ENCODE measurements at regions of chr13 and their contacts with region 1.

Region 1: GRCh38 chr13:35210261-35210660 is 266.2 kb downstream of the MAB21L1 start:
- DNase-seq: no peak
- ATAC-seq: no peak
- H3K4me3 ChIP-seq: no peak overlapping the region
- H3K27ac ChIP-seq: no peak overlapping the region
- H3K4me1 ChIP-seq: no peaks in the 10 kb centered on the region
- H3K27me3 ChIP-seq: no peaks in the 10 kb centered on the region
- CTCF ChIP-seq: no peak
- POLR2A ChIP-seq: no peak
- RAD21 ChIP-seq: no peak

Region 2: DNA sequence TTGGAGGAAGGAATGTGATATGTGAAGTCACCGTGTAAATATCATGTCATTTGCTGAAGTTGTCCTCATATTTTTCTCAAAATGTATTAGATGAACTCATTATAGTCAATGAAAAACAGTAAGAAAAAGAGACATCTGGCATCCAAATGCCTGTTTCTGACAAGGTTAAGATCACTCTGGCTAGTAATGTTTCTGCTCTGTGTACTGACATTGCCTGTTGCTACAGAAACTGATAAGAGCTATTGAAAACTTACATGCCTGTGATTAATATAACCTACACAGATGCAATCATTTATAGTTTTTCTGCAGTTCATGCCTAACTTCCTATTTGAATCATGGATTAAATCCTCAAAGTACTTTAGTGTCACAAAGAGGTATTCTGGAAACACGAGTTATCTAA is 18.4 kb before region 1 on chr13:
- CTCF ChIA-PET with region 1: no interaction called
- POLR2A ChIA-PET with region 1: interaction called, 15 read pairs
- dilution Hi-C with region 1: no loop called
- in situ Hi-C with region 1: no loop called
- intact Hi-C with region 1: no loop called
- DNase-seq: no peak
- ATAC-seq: no peak
- H3K4me3 ChIP-seq: no peak overlapping the region
- H3K27ac ChIP-seq: no peak overlapping the region
- H3K4me1 ChIP-seq: no peaks in the 10 kb centered on the region
- H3K27me3 ChIP-seq: no peaks in the 10 kb centered on the region
- CTCF ChIP-seq: no peak
- POLR2A ChIP-seq: no peak
- RAD21 ChIP-seq: no peak

Region 3: DNA sequence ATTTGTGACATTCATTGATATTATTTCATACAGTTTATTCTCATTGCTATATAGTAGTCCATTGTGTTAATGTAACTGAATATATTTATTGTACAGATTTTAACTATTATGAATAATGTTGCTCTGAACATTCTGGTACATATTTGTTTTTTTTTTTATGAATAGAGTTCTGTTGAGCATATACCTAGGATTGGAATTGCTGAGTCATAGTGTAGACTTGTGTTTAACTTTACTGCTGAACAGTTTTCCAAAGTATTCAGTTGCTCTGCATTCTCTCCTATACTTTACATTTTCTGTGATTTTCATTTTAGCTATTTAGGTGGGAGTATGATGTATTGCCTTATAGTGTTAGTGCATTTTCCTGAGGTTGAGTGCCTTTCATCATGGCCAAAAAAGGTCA is 168.7 kb after region 1 on chr13:
- CTCF ChIA-PET with region 1: no interaction called
- POLR2A ChIA-PET with region 1: no interaction called
- dilution Hi-C with region 1: no loop called
- in situ Hi-C with region 1: no loop called
- intact Hi-C with region 1: no loop called
- DNase-seq: peak; percentile 19
- ATAC-seq: peak; percentile 72
- H3K4me3 ChIP-seq: no peak overlapping the region
- H3K27ac ChIP-seq: no peak overlapping the region
- H3K4me1 ChIP-seq: no peaks in the 10 kb centered on the region
- H3K27me3 ChIP-seq: no peaks in the 10 kb centered on the region
- CTCF ChIP-seq: no peak
- POLR2A ChIP-seq: no peak
- RAD21 ChIP-seq: no peak

Region 4: GRCh38 chr13:35468195-35468594 is 257.9 kb after region 1 on chr13:
- CTCF ChIA-PET with region 1: no interaction called
- POLR2A ChIA-PET with region 1: no interaction called
- dilution Hi-C with region 1: no loop called
- in situ Hi-C with region 1: no loop called
- intact Hi-C with region 1: no loop called
- DNase-seq: no peak
- ATAC-seq: no peak
- H3K4me3 ChIP-seq: no peak overlapping the region
- H3K27ac ChIP-seq: no peak overlapping the region
- H3K4me1 ChIP-seq: no peaks in the 10 kb centered on the region
- H3K27me3 ChIP-seq: peaks cover 24% of the 10 kb centered on the region
- CTCF ChIP-seq: no peak
- POLR2A ChIP-seq: no peak
- RAD21 ChIP-seq: no peak

Region 5: DNA sequence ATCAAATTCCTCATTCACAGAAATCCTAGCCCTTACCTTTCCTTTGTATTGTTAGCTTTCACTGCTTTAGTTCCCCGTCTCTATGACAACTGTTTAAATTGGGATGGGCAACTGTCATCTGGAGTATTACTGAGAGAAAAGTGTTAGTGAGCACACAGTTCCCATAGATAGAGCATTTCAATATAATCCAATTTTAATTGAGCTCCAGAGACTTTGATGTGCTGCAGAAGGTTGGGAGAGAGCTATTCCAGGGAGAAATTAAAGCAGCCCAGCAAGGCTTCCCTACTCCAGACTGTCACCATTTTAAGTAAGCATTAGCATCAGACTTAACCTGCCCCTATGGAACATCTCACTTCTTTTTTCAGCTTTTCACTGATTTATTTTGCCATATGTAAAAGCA is 321.3 kb after region 1 on chr13:
- CTCF ChIA-PET with region 1: no interaction called
- POLR2A ChIA-PET with region 1: no interaction called
- dilution Hi-C with region 1: no loop called
- in situ Hi-C with region 1: no loop called
- intact Hi-C with region 1: no loop called
- DNase-seq: no peak
- ATAC-seq: no peak
- H3K4me3 ChIP-seq: no peak overlapping the region
- H3K27ac ChIP-seq: no peak overlapping the region
- H3K4me1 ChIP-seq: no peaks in the 10 kb centered on the region
- H3K27me3 ChIP-seq: no peaks in the 10 kb centered on the region
- CTCF ChIP-seq: no peak
- POLR2A ChIP-seq: no peak
- RAD21 ChIP-seq: no peak

Region 6: DNA sequence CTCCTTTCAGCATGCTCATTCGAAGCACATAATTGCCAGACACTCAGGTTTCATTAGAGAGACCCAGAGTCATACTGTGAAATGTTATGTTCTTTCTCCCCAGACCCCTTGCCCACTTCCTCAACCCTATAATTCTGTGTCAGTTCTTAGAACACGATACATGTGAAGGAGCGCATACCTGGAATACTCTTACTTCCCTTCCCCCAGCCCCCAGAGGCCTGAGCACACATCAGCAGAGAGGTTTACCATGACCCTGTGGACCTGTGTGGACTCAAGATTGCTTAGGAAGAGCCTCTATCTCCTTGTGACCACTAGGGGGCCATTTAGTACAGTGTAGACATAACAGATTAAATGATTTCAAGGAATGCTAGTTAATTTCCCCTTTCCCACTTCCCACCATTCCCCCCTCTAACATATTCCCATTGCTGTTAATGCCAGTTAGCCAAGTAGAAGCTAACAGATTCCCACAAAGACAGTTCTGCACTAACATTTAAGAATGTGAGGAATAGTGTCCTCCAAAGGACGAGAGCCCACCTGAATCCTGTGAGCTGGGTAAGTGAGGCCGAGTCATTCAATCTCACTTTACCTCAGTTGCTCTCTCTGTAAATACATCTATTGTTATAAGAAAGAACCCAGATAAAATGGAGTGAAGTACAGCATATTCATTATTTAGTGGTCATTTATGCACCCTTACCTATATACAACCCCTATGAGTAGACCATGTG is 420.5 kb after region 1 on chr13:
- CTCF ChIA-PET with region 1: no interaction called
- POLR2A ChIA-PET with region 1: interaction called, 7 read pairs
- dilution Hi-C with region 1: no loop called
- in situ Hi-C with region 1: no loop called
- intact Hi-C with region 1: loop called (anchors 10 kb)
- DNase-seq: peak; percentile 70
- ATAC-seq: peak; percentile 98
- H3K4me3 ChIP-seq: no peak overlapping the region
- H3K27ac ChIP-seq: no peak overlapping the region
- H3K4me1 ChIP-seq: no peaks in the 10 kb centered on the region
- H3K27me3 ChIP-seq: no peaks in the 10 kb centered on the region
- CTCF ChIP-seq: peak; percentile 68
- POLR2A ChIP-seq: no peak
- RAD21 ChIP-seq: peak; percentile 66

Region 7: DNA sequence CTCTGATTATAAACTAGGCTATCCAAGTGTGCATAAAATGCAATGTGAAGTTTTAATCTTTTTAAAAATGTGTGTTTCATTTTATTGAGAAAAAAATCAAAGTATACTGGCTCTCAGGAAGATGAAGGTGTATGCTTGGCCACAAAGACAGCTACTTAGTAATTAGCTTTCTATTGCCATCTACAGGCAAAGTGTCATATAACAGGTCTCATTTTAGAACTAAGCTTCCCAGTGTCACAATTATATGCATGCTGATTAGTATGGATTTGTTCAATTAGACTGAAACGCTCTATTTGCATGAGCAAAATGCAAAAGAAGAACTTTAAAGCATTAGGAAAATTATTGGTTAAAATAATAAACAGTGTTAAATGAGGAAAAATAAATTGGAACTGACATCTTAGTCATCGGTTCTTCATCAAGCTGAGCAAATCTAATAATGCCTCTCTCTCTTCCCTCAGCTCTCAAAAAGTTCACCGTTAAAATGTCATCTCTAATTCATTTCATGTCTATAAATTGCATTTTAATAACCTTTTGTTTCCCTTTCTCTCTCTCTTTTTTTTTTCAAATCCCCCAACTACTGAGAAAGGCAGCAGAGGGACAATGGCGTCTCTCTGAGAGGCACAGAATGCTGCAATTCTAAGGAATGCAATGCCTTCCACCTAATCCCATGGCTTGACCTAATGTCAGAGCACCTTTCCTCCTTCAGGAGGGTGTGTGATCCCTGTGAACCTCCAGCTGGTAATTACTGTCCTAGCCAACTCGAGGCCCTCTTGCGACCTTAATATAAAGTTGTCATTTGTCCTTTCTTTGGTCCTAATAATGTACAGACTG is 579.3 kb after region 1 on chr13:
- CTCF ChIA-PET with region 1: no interaction called
- POLR2A ChIA-PET with region 1: no interaction called
- dilution Hi-C with region 1: no loop called
- in situ Hi-C with region 1: no loop called
- intact Hi-C with region 1: loop called (anchors 5 kb)
- DNase-seq: peak; percentile 61
- ATAC-seq: peak; percentile 86
- H3K4me3 ChIP-seq: no peak overlapping the region
- H3K27ac ChIP-seq: no peak overlapping the region
- H3K4me1 ChIP-seq: peaks cover 2% of the 10 kb centered on the region; the same call in 1 of the 2 replicates
- H3K27me3 ChIP-seq: no peaks in the 10 kb centered on the region
- CTCF ChIP-seq: peak; percentile 66
- POLR2A ChIP-seq: no peak
- RAD21 ChIP-seq: peak; percentile 70

Region 8: DNA sequence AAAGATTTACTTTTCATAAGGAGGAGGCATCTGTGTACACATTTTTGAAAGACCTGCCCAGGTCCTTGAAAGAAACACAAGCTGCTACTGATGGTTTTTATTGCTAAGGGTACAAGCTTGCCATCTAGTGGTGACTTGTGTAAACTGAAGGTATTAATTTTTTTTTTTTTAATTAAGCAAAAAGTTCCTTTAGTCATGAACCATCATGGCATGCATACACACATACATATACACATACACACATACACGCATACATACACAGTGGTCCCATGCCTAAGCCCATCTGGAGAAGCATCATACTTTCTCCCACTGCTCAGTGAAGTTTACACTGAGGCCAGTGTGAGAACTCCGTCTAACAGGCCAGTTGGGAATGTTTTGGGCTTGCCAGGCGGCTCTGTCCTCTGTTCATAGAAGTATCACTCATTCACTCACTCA is 608.4 kb after region 1 on chr13:
- CTCF ChIA-PET with region 1: interaction called, 3 read pairs
- POLR2A ChIA-PET with region 1: no interaction called
- dilution Hi-C with region 1: no loop called
- in situ Hi-C with region 1: no loop called
- intact Hi-C with region 1: loop called (anchors 10 kb)
- DNase-seq: peak; percentile 60
- ATAC-seq: peak; percentile 77
- H3K4me3 ChIP-seq: no peak overlapping the region
- H3K27ac ChIP-seq: no peak overlapping the region
- H3K4me1 ChIP-seq: no peaks in the 10 kb centered on the region
- H3K27me3 ChIP-seq: no peaks in the 10 kb centered on the region; the same call in 1 of the 2 replicates
- CTCF ChIP-seq: peak; percentile 68
- POLR2A ChIP-seq: no peak
- RAD21 ChIP-seq: peak; percentile 61